Right ventricle myocardium superior (tissue), 1 donor: ENCODE measurements at regions of chr5 and their contacts with region 1.

Region 1: GRCh38 chr5:150846654-150847333 is 473 bp downstream of the IRGM start:
- DNase-seq: no peak
- ATAC-seq: peak; percentile 95

Region 2: DNA sequence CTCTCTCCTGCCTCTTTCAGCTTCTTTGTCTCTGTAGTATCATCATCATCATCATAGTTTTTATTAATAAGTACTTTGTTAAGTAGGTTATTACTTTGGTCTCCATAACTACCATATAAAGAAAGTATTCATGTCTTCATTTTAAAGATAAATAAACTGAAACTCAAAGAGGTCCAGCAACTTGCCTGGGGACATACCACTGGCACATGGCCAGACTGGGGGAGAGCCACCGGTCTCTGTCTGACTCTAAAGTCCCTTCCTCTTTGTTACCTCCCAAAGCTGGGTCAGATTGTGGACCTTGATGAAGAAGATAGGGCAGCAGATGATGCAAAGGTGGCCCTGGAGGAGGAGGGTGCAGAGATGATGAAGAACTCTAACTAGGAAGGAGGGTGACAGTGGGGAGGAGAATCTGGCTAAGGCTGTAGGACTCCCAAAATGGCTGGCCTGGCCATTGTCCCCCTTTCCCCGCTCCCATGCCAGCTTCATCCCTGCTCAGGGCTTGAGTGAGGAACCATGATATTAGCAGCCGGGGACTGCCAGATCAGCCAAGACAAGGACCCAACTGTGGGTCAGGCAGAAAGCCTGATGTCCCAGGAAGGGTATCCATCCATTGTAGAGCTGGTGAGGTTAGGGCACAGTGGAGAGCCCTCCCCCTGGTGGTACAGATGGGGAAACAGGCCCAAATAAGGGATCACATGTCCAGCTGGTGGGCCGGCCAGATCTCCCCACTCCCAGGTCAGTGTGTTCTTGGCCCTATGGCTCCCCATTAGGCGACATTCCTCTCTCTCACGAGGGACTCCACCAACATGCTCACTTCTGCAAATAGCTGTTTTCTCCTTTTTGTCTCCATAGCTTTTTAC is 671.5 kb before region 1 on chr5:
- intact Hi-C with region 1: no loop called
- DNase-seq: no peak
- ATAC-seq: no peak

Region 3: GRCh38 chr5:150449517-150450339 is 397.1 kb before region 1 on chr5 and contains the start of gene RPS14:
- intact Hi-C with region 1: loop called (anchors 10 kb)
- DNase-seq: peak; percentile 96
- ATAC-seq: peak; percentile 98
- total RNA-seq, gene RPS14: 1,133 TPM

Region 4: DNA sequence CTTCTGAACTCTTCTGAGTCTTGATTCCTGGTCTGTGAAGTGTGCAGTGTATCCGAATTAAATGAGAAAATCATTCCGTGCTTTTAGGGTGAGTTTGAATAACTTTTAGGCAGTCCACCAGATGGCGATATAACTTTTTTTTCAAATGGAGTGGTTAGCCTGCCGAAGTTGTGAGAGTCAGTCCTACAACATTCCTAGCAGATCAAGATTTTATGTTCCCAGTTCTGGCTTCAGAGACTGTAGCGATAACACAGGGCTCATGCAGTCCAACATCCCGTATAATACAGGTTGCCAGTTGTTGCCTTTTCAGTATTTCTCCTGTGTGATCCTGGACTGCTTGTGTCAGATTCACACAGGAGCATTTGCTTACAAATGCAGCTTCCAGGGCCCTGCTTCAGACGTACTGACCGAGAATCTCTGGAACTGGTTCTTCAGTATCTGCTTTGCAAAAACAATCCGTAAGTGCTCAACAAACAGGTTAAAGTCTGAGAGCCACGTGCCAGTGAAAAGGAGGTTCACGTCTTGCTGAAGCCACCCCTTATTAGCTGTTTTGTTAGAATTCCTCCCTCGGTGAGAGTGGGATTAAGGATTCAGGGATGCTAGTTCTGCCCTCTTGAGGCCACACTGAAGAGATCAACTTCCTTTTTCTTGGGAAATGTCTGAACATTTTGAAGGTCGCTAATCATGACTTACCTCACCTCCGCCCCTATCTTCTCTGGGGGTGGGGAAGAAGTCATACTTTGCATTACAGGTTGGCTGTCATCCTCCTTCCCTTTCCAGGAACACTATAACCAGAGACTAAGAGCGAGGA is 45.5 kb before region 1 on chr5:
- intact Hi-C with region 1: loop called (anchors 2 kb)
- DNase-seq: no peak
- ATAC-seq: peak; percentile 88

Region 5: GRCh38 chr5:151523335-151523734 is 676.5 kb after region 1 on chr5:
- intact Hi-C with region 1: no loop called
- DNase-seq: no peak
- ATAC-seq: no peak